Right ventricle myocardium inferior (tissue), 1 donor: ENCODE measurements at regions of chr20 and their contacts with region 1.

Region 1: DNA sequence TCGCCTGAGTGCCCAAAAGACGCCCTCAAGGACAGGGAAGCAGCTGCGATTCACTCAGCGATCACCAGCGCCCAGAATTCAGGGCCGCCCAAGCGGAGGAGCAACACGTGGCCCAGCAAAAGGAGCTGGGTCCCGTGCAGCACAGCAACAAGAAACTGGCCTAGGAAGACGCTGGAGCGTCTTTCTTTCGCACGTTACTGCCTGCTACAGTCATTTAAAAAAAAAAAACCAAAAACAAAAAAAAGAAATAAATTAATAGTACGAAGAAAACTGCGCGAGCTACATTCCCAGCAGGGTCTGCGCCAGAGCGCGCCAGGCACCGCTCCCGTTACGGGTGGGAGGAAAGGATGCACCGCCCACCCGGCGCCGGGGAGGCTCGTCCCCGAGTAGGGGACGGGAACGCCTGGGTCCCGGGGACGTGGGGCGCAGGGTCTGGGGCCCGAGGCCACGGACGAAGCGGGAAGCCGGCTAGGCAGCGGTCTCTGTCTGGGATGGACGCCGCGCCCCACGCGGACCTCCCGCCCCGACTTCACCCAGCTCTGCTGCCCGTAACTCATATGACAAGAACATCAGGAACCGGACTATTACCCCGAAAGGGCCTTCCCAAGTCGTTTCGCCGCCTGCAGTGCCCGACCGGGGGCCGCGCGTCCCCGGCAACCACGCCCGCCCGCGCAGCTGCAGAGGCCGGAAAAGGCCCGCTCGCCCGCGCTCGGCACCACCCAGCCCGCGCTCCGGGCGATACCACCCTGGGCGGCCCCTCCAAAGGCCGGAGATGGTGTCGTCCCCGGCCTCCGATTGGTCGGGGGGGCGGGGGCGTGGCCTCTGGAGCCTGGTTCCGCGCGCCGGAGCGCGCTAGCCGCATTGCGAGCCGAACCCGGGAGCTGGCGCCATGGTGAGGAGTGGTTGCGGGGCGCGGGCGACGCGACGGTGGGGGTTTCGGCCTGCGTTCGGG is at the start of gene NOP56:
- DNase-seq: peak; percentile 94
- ATAC-seq: peak; percentile 99
- total RNA-seq, gene NOP56: 46.7 TPM

Region 2: GRCh38 chr20:2663887-2664719 is 12.1 kb after region 1 on chr20 and contains the start of gene IDH3B:
- intact Hi-C with region 1: loop called (anchors 1 kb)
- DNase-seq: peak; percentile 96
- ATAC-seq: peak; percentile 97
- total RNA-seq, gene IDH3B: 255 TPM